Heart right ventricle (tissue), 16 donors: ENCODE measurements at regions of chr9 and their contacts with region 1.

Region 1: DNA sequence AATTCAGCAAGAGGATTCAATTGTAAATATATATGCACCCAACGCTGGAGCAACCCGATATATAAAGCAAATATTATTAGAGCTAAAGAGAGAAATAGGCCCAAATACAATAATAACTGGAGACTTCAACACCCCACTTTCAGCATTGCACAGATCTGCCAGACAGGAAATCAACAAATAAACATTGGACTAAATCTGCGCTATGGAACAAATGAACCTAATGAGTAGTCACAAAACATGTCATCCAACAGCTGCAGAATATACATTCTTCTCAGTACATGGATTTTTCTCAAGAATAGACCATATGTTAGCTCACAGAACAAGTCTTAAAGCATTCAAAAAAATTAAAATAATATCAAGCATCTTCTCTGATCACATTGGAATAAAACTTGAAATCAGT is 86.1 kb upstream of the SLC1A1 start:
- DNase-seq: no peak
- ATAC-seq: no peak
- H3K4me3 ChIP-seq: no peak overlapping the region
- H3K27ac ChIP-seq: no peak overlapping the region
- H3K4me1 ChIP-seq: no peaks in the 10 kb centered on the region
- H3K27me3 ChIP-seq: no peaks in the 10 kb centered on the region
- CTCF ChIP-seq: no peak

Region 2: GRCh38 chr9:4475301-4475700 is 71.1 kb after region 1 on chr9:
- intact Hi-C with region 1: loop called in 1 of 10 experiments (anchors 1 kb)
- DNase-seq: no peak
- ATAC-seq: no peak
- H3K4me3 ChIP-seq: no peak overlapping the region
- H3K27ac ChIP-seq: no peak overlapping the region
- H3K4me1 ChIP-seq: no peaks in the 10 kb centered on the region
- H3K27me3 ChIP-seq: no peaks in the 10 kb centered on the region
- CTCF ChIP-seq: no peak